Endothelial cell of umbilical vein (primary cell): ENCODE measurements at regions of chr7 and their contacts with region 1.

Region 1: DNA sequence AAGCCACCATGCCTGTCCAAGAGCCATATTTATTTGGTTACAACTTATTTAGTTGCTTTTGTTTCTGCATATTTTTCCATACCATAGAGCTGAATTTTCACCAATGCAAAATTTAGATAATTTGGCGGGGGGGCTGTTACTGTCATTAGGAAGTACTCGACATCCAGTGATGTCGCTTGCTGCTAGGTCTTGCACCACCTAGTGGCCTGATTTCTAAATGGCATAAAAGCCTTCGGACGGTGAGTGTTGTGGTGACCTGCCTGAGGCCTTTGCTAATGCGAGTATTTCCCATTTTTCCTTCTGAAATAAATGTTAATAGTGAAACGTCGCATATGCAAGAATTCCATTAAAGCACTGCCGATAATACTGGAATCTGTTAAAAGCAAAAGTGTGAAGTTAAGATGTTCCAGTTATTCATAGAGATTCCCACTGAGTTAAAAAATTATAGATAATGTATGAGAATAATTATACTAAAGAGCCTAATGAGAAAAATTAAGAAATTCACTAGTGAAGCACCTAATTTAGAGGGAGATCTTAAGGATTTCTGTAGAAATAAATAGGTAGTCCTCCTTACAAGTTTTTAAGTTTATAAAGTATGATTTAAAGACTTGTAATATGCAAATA is 86.1 kb upstream of the DNAJB6 start:
- DNase-seq: peak; percentile 64
- H3K4me3 ChIP-seq: no peak overlapping the region
- H3K27ac ChIP-seq: no peak overlapping the region
- H3K4me1 ChIP-seq: peaks cover 13% of the 10 kb centered on the region
- H3K27me3 ChIP-seq: no peaks in the 10 kb centered on the region
- CTCF ChIP-seq: peak; percentile 67 to 76
- POLR2A ChIP-seq: no peak

Region 2: DNA sequence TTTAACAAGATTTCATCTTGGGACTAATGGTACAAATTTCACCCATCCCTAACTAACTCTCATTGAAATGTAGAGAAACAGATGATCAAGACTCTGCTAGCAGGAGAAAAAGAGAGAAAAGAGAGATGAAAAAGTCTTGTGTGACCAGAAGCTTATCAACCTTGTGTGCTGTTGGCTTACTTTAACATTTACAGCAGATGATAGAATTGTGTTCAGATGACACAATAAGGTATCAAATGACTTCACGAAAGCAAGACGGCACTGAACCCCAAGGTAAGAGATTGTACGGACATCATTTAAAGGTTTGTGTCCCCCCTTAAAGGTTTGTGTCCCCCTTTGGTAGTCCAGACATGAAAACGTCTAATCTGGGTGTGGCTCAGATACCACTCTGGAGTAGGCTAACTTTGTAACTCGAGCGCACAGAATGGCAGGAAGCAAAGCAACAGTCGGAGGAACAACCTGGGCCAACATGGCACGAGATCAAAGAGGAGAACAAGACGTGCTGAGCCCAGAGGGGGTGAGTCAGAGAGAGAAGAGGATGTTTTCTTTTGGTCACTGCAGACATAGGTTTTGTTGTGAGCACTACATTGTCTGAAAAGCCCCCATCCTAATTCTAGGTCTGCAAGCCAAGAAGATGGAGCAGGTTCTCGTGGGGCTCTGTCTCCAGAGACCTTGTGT is 347.3 kb before region 1 on chr7:
- CTCF ChIA-PET with region 1: no interaction called
- POLR2A ChIA-PET with region 1: no interaction called
- dilution Hi-C with region 1: no loop called
- intact Hi-C with region 1: loop called (anchors 2 kb)
- DNase-seq: peak; percentile 81
- H3K4me3 ChIP-seq: no peak overlapping the region
- H3K27ac ChIP-seq: peak overlapping the region; percentile 80
- H3K4me1 ChIP-seq: peaks cover 14% of the 10 kb centered on the region
- H3K27me3 ChIP-seq: no peaks in the 10 kb centered on the region
- CTCF ChIP-seq: no peak
- POLR2A ChIP-seq: peak; percentile 34

Region 3: GRCh38 chr7:156969972-156970420 is 280.7 kb before region 1 on chr7:
- CTCF ChIA-PET with region 1: interaction called, 3 read pairs
- POLR2A ChIA-PET with region 1: no interaction called
- dilution Hi-C with region 1: no loop called
- intact Hi-C with region 1: loop called (anchors 2 kb)
- DNase-seq: peak; percentile 15
- H3K4me3 ChIP-seq: no peak overlapping the region
- H3K27ac ChIP-seq: no peak overlapping the region
- H3K4me1 ChIP-seq: no peaks in the 10 kb centered on the region
- H3K27me3 ChIP-seq: no peaks in the 10 kb centered on the region
- CTCF ChIP-seq: peak; percentile 20 to 22
- POLR2A ChIP-seq: no peak

Region 4: GRCh38 chr7:157238087-157238486 is 12.6 kb before region 1 on chr7:
- CTCF ChIA-PET with region 1: interaction called, 11 read pairs
- POLR2A ChIA-PET with region 1: interaction called, 3 read pairs
- dilution Hi-C with region 1: no loop called
- intact Hi-C with region 1: no loop called
- DNase-seq: no peak
- H3K4me3 ChIP-seq: no peak overlapping the region
- H3K27ac ChIP-seq: no peak overlapping the region
- H3K4me1 ChIP-seq: peaks cover 11% of the 10 kb centered on the region
- H3K27me3 ChIP-seq: no peaks in the 10 kb centered on the region
- CTCF ChIP-seq: no peak
- POLR2A ChIP-seq: no peak